Naive thymus-derived CD4-positive, alpha-beta T cell (primary cell): ENCODE measurements at regions of chr3 and their contacts with region 1.

Region 1: DNA sequence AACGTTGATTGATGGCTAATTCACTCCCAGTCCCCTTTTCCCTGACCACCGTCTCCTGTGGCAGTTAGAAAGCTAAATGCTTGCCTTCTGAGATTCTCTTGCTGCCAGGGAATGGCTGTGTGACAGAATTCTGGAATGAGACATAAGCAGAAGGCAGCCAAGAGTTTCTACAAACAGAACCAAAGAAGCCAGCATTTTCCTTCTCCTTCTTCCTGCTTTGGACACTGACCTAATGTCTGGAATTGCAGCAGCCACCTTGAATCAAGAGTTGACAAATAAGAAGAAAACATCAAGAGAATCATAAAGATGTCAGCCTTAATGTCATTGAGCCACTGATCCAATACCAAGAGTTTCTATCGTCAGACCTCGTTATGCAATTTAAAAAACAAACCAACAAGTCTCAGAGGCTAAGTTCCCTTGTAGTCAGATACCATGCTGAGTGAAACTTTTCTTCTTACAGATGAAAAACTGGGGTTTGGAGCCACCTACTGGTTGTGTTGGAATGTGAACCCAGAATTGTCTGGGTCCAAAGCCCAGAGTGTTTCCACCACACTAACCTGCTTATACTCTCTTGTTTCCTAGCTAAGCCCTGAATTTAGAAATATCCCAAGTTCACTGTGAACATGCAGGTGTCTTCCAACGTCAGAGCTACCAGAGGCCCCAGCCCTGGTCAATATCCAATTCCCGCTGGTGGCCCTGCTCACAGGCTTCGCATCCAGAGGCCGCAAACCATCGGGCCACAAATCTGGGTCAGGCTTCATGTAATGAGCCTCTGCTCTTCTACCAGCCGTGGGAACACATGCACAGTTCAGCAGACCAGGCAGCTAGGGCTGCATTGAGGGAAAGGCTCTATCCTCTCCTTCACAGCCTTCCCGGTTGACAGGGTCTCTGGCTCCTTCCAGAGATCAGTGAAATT is 42.5 kb downstream of the MCF2L2 start:
- DNase-seq: peak in 8 of 9 donors; percentile 40 to 67 (median 57)
- ATAC-seq: peak; percentile 81
- H3K4me3 ChIP-seq: no peak overlapping the region
- H3K4me3 Mint-ChIP-seq: no peak overlapping the region
- H3K27ac ChIP-seq: no peak overlapping the region
- H3K27ac Mint-ChIP-seq: peak overlapping the region in 1 of 9 donors; percentile 5
- H3K4me1 ChIP-seq: no peaks in the 10 kb centered on the region
- H3K4me1 Mint-ChIP-seq: peaks cover 0 to 6% (median 3%) of the 10 kb centered on the region in 7 donors
- H3K27me3 ChIP-seq: no peaks in the 10 kb centered on the region
- H3K27me3 Mint-ChIP-seq: no peaks in the 10 kb centered on the region

Region 2: GRCh38 chr3:182713743-182714517 is 672.0 kb before region 1 on chr3:
- CTCF ChIA-PET with region 1: interaction called, 5 read pairs
- POLR2A ChIA-PET with region 1: no interaction called
- intact Hi-C with region 1: loop called (anchors 1 kb)
- DNase-seq: peak in 6 of 9 donors; percentile 11 to 51 (median 33)
- ATAC-seq: peak; percentile 66
- H3K4me3 ChIP-seq: no peak overlapping the region
- H3K4me3 Mint-ChIP-seq: no peak overlapping the region
- H3K27ac ChIP-seq: no peak overlapping the region
- H3K27ac Mint-ChIP-seq: no peak overlapping the region
- H3K4me1 ChIP-seq: no peaks in the 10 kb centered on the region
- H3K4me1 Mint-ChIP-seq: peaks cover 4 to 16% (median 7%) of the 10 kb centered on the region in 7 donors
- H3K27me3 ChIP-seq: no peaks in the 10 kb centered on the region
- H3K27me3 Mint-ChIP-seq: peaks cover 0 to 2% (median 0%) of the 10 kb centered on the region in 5 donors

Region 3: DNA sequence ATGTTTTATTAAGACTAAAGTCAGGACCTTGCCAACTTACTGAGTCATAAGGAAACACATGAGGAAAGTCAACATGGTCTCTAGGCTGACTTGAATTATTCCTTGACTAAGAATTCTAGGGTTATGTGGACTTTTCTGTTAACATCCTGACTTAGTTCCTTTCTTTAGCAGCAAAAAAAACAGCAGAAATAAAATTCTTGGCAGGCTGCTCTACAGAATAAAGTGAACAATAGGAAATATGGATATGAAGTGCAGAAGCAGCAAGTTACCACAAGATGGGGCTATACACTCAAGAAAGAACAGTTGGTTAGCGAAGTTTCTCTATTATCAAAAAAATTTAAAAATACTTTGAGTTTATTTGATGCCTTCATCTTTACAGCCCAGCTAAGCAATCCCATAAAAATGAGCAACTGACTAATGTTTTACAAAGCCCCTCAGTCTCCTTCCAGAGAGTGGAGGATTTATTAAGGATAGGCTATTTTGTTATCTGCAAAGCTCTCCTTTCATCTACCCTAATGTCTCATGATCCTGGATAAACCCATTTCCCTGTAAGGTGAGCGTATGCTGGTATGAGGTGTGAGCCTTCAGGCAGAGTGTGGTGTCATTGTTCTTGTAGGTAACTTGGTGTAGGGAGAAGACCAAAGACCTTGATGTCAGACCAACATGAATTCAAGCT is 263.6 kb before region 1 on chr3:
- CTCF ChIA-PET with region 1: interaction called, 100 read pairs
- POLR2A ChIA-PET with region 1: no interaction called
- intact Hi-C with region 1: loop called (anchors 1 kb)
- DNase-seq: peak in 7 of 9 donors; percentile 15 to 60 (median 49)
- ATAC-seq: peak; percentile 75
- H3K4me3 ChIP-seq: no peak overlapping the region
- H3K4me3 Mint-ChIP-seq: no peak overlapping the region
- H3K27ac ChIP-seq: no peak overlapping the region
- H3K27ac Mint-ChIP-seq: no peak overlapping the region
- H3K4me1 ChIP-seq: no peaks in the 10 kb centered on the region
- H3K4me1 Mint-ChIP-seq: peaks cover 0 to 6% (median 0%) of the 10 kb centered on the region in 7 donors
- H3K27me3 ChIP-seq: no peaks in the 10 kb centered on the region
- H3K27me3 Mint-ChIP-seq: peaks cover 2 to 5% (median 4%) of the 10 kb centered on the region in 5 donors

Region 4: DNA sequence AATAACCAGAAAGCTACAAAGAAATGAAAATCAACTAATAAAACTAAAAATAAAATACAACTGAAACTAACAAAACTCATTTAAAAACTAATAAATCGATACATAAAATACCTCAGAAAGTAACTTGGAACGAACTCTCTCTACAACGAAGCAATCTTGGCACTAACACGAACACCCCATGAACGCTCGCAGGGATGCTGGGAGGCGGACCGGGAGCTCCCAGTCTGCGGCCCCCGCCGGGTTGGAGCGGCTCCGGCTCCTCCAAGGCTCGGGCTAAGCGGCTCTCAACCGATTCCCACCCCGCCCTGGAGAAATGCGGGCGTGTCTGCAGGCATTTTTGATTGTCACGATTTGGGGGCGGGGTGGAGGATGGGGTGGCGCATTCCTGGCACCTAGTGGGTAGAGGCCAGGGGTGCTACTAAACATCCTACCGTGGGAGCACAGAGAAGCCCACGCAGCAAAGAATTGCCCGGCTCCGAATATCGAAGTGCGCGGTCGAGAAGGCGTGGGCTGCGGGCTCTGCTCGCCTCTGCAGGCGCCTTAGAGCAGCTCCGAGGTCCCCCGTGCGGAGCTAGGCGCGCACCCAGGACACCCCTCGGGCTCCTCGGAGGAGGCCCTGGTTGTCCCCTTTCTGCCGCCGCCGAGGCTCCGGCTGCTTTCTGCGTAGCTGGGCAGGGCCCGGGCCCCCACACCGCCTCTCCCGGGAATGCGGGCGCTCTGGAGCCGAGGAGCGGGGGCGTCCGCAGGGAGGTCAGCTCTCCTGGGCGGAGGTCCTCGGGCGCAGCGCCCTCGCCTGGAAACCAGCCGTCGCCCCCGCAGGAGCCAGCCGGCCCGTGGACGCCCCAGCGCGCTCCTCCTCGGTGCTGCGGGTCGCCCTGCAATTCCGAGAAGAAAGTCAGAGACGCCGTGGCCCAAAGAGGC is 207.1 kb before region 1 on chr3:
- CTCF ChIA-PET with region 1: interaction called, 82 read pairs
- POLR2A ChIA-PET with region 1: no interaction called
- intact Hi-C with region 1: loop called (anchors 1 kb)
- DNase-seq: peak in 7 of 9 donors; percentile 22 to 61 (median 31)
- ATAC-seq: peak; percentile 67
- H3K4me3 ChIP-seq: peak overlapping the region; percentile 46
- H3K4me3 Mint-ChIP-seq: peak overlapping the region; percentile 63 to 85 (median 78)
- H3K27ac ChIP-seq: no peak overlapping the region
- H3K27ac Mint-ChIP-seq: no peak overlapping the region
- H3K4me1 ChIP-seq: no peaks in the 10 kb centered on the region
- H3K4me1 Mint-ChIP-seq: peaks cover 5 to 15% (median 8%) of the 10 kb centered on the region in 7 donors
- H3K27me3 ChIP-seq: peaks cover 0 to 3% of the 10 kb centered on the region in 2 donors
- H3K27me3 Mint-ChIP-seq: peaks cover 28 to 55% (median 46%) of the 10 kb centered on the region in 5 donors

Region 5: DNA sequence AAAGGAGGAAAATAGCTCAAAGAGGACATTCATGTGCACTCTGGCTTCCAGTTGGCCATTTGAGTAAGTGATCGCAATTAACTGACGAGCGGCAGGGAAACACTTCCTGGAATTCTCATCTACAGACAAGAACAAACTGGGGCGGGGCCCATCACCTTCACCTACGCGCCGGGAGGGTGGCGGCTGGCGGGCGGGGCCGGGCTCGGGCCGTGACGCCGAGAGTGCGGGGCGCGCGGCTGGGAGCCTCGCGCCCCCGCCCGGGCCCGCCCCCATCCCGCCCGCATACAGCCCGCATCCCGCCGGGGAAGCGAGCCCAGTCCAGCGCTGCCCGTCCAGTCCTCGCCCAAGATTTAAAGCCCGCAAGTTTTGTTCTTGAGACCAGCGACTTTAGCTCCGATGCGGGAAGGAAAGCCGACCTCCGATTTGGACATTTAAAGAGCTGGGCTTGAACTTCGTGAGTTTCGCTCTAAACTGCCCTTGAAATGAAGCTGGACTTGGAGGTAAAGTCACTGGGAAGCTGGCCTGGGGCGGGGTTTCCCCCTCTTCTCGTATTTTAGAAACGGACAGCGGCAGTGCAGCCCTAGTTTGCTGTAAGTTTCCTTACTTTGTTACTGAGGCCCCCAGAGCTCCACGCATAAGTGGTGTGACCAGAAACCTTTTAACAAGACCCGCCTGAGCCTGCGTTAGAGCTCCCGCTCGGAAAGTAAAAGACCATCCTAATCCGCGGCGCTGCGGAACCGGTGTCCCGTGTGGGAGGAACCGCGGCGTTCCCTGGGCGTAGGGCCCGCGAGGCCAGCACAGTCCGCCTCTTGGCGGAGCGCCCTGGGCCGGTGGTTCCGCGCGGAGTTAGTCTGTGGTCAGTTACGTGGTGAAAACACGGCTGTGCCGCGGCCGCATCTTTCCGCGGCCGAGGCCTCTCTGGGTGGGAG is 132.7 kb before region 1 on chr3 and contains the start of gene B3GNT5:
- CTCF ChIA-PET with region 1: no interaction called
- POLR2A ChIA-PET with region 1: no interaction called
- intact Hi-C with region 1: loop called in 1 of 2 experiments (anchors 2 kb)
- DNase-seq: peak in 8 of 9 donors; percentile 3 to 60 (median 20)
- ATAC-seq: peak; percentile 77
- H3K4me3 ChIP-seq: peak within 1 kb of the TSS; percentile 73
- H3K4me3 Mint-ChIP-seq: peak within 1 kb of the TSS; percentile 73 to 86 (median 78)
- H3K27ac ChIP-seq: no peak within 1 kb of the TSS
- H3K27ac Mint-ChIP-seq: peak within 1 kb of the TSS in 2 of 9 donors; percentile 9 to 46
- H3K4me1 ChIP-seq: peaks cover 0 to 3% of the 10 kb centered on the region in 2 donors
- H3K4me1 Mint-ChIP-seq: peaks cover 0 to 14% (median 11%) of the 10 kb centered on the region in 7 donors
- H3K27me3 ChIP-seq: peaks cover 0 to 5% of the 10 kb centered on the region in 2 donors
- H3K27me3 Mint-ChIP-seq: peaks cover 18 to 54% (median 43%) of the 10 kb centered on the region in 5 donors
- total RNA-seq, gene B3GNT5: 0.22 to 13.1 (median 1.5) TPM

Region 6: GRCh38 chr3:183766745-183767606 is 381.0 kb after region 1 on chr3:
- CTCF ChIA-PET with region 1: no interaction called
- POLR2A ChIA-PET with region 1: no interaction called
- intact Hi-C with region 1: loop called (anchors 1 to 2 kb)
- DNase-seq: peak; percentile 41 to 72 (median 65)
- ATAC-seq: peak; percentile 96
- H3K4me3 ChIP-seq: no peak overlapping the region
- H3K4me3 Mint-ChIP-seq: no peak overlapping the region
- H3K27ac ChIP-seq: no peak overlapping the region
- H3K27ac Mint-ChIP-seq: peak overlapping the region in 4 of 9 donors; percentile 3 to 73 (median 40)
- H3K4me1 ChIP-seq: no peaks in the 10 kb centered on the region
- H3K4me1 Mint-ChIP-seq: peaks cover 5 to 18% (median 12%) of the 10 kb centered on the region in 7 donors
- H3K27me3 ChIP-seq: no peaks in the 10 kb centered on the region
- H3K27me3 Mint-ChIP-seq: no peaks in the 10 kb centered on the region

Region 7: DNA sequence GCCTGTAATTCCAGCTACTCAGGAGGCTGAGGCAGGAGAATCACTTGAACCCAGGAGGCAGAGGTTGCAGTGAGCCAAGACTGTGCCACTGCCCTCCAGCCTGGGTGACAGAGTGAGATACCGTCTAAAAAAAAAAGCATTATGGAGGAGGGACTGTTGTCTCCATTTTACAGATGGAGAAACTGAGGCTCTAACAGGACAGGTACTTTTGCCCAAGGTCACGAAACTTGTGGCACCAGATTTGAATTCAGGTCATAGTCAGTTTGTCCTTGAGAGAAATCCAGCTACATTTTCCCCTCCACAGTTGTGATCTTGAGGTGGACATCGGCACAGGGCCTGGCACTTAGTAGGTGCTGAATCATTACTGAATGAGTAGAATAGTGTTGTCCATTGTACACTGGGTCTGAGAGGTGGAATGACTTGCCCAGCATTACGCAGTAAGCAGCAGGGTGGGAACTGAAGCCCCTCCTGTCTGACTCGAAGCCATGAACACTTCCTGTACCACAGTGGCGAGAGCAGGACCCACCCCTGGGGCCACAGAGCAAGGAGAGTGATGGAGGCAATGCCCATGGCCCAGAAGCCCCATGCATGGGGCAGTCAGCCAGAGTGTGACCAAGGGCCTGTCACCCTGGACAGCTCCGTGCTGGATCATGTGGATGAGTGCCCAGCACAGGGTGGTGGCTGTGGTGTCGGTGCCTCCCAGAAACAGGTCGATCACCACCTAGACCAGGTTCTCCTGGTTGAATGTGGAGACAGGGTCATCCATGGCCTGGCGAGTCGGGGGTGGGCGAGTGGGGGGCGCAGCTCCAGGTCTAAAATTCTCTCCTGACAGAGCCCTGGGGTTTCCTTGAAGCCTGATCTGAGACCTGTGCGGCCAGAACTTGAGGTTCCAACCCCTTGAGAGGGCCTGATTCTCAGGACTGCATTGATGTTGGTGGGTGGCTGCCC is 519.2 kb after region 1 on chr3:
- CTCF ChIA-PET with region 1: no interaction called
- POLR2A ChIA-PET with region 1: no interaction called
- intact Hi-C with region 1: no loop called
- DNase-seq: no peak
- ATAC-seq: no peak
- H3K4me3 ChIP-seq: no peak overlapping the region
- H3K4me3 Mint-ChIP-seq: no peak overlapping the region
- H3K27ac ChIP-seq: no peak overlapping the region
- H3K27ac Mint-ChIP-seq: no peak overlapping the region
- H3K4me1 ChIP-seq: no peaks in the 10 kb centered on the region
- H3K4me1 Mint-ChIP-seq: no peaks in the 10 kb centered on the region
- H3K27me3 ChIP-seq: no peaks in the 10 kb centered on the region
- H3K27me3 Mint-ChIP-seq: peaks cover 5 to 17% (median 8%) of the 10 kb centered on the region in 5 donors